ENCODE measurements at regions of chr5 and their contacts with region 1.

Region 1: DNA sequence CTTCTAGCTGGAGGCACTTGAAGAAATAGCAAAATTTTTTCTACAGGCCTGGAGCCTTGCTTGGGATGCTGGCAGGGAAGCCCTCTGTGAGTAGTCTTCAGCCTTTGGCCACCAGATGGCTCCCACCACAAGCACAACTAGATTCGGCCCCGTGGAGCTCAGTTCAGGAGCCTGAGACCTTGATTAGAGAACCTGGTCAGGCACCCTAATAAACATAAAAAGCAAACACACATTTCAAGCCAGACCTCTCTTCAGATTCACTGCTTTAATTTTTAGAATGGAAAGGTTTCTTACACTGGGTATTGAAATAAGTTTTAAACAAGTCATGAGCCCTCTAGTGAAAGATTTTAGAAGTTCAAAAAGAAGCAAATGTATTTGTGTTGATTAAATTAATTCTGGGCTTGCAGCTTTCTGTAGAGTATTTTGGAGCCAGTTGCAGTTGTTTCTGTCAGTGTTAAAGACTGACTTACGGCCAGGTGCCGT is 41.4 kb downstream of the GLRX start:
- DNase-seq: peak; percentile 83 to 86 (median 84)
- H3K4me3 ChIP-seq: peak overlapping the region in 3 of 7 experiments; percentile 2 to 52 (median 49)
- H3K27ac ChIP-seq: no peak overlapping the region
- H3K4me1 ChIP-seq: peaks cover 11 to 29% (median 25%) of the 10 kb centered on the region in 4 experiments
- H3K27me3 ChIP-seq: no peaks in the 10 kb centered on the region

Region 2: GRCh38 chr5:95646554-95647431 is 134.3 kb before region 1 on chr5 and contains the start of gene RFESD:
- CTCF ChIA-PET with region 1: interaction called, 22 read pairs
- POLR2A ChIA-PET with region 1: no interaction called
- DNase-seq: peak; percentile 97 to 99 (median 99)
- H3K4me3 ChIP-seq: peak within 1 kb of the TSS; percentile 13 to 76 (median 63)
- H3K27ac ChIP-seq: peak within 1 kb of the TSS; percentile 60 to 83
- H3K4me1 ChIP-seq: peaks cover 12 to 31% (median 20%) of the 10 kb centered on the region in 4 experiments
- H3K27me3 ChIP-seq: no peaks in the 10 kb centered on the region

Region 3: DNA sequence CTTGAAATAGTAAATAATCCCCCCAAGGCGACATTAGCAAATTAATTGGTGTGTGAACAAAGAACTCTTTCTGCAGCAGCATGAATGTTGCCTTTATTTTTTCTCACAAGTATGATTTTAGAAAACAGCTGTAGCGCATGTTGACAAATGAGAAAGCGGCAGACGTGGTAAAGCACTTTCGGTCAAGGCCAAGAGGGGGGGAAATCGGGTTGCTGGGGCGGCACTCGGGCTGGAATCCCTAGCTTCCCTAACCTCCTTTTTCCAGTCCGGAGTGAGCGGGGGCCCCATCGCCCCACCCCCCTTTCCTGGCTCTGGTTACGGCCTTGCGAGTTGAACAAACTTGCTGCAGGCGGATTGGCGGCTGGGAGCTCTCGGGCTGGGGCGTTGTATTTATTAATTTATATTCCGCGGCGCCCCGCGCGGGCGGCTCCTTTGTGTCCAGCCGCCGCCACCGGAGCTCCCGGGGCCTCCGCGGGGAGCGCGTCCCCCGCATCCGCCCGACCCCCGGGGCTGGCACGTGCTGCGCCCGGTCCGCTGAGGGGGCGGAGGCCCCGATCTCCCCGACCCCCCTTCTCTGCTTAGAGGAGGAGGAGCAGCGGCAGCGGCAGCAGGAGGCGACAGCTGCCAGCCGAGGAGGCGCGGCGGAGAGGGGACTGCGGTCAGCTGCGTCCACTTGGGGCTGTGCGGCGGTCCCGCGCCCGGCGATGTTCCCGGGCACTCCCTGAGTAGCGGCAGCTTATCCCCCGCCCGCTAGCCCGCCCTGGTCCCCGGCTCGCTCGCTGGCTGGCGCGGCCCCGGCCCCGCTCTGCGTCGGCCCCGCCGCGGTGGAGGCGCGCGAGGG is 50.2 kb before region 1 on chr5 and contains the start of gene RHOBTB3:
- CTCF ChIA-PET with region 1: interaction called, 10 read pairs
- POLR2A ChIA-PET with region 1: no interaction called
- DNase-seq: peak; percentile 61 to 87 (median 77)
- H3K4me3 ChIP-seq: peak within 1 kb of the TSS; percentile 69 to 96 (median 86)
- H3K27ac ChIP-seq: peak within 1 kb of the TSS; percentile 44 to 84
- H3K4me1 ChIP-seq: peaks cover 14 to 41% (median 25%) of the 10 kb centered on the region in 4 experiments
- H3K27me3 ChIP-seq: no peaks in the 10 kb centered on the region

Region 4: DNA sequence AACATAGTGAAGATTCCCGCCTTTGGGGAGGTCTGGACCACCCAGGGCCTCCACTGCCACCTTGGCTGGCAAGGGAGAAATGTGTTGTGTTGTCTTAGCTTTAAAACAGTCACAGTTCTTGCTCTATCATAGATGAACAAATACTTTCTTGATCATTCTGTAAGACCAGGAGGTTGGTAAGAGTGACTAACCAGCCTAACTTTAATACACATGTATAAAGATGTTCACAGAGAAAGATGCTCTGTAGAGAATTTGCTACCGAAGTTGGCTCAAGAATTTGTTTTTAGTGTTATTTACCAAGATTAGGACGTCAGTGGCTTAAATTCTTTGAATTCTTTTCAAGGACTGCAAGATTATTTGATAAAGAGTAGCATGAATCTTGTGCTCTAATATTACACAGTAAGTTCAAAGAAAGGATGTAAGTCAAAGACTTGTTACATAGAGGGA is 13.0 kb after region 1 on chr5:
- CTCF ChIA-PET with region 1: interaction called, 23 read pairs
- POLR2A ChIA-PET with region 1: no interaction called
- DNase-seq: no peak
- H3K4me3 ChIP-seq: no peak overlapping the region
- H3K27ac ChIP-seq: no peak overlapping the region
- H3K4me1 ChIP-seq: no peaks in the 10 kb centered on the region
- H3K27me3 ChIP-seq: no peaks in the 10 kb centered on the region

Region 5: DNA sequence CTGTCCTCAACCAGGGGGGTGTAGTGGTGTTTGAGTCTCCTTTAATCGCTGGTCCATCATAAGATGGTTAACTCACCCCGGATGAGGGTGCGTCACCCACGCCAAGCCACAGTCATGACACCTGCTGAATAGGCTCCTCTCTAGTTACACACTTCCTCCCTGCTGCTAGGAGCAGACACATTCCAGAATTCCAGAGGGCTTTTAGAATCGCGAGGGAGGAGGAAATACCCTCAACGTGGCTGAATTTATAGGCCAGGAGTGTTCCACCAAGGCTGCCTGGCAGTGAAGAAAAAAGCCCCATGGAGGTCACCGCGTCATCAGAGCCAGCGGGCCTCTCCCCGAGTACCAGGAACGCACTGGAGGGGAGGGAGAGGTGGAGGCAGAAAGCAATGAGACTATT is 36.3 kb after region 1 on chr5:
- CTCF ChIA-PET with region 1: interaction called, 33 read pairs
- POLR2A ChIA-PET with region 1: no interaction called
- DNase-seq: no peak
- H3K4me3 ChIP-seq: peak overlapping the region in 4 of 7 experiments; percentile 47 to 69 (median 62)
- H3K27ac ChIP-seq: peak overlapping the region in 1 of 2 experiments; percentile 47
- H3K4me1 ChIP-seq: peaks cover 14 to 61% (median 60%) of the 10 kb centered on the region in 4 experiments
- H3K27me3 ChIP-seq: no peaks in the 10 kb centered on the region

Region 6: GRCh38 chr5:95835682-95836385 is 54.7 kb after region 1 on chr5:
- CTCF ChIA-PET with region 1: interaction called, 430 read pairs
- POLR2A ChIA-PET with region 1: interaction called, 3 read pairs
- DNase-seq: peak in 2 of 3 donors; percentile 80 to 85
- H3K4me3 ChIP-seq: peak overlapping the region in 6 of 7 experiments; percentile 46 to 82 (median 72)
- H3K27ac ChIP-seq: peak overlapping the region; percentile 37 to 75
- H3K4me1 ChIP-seq: peaks cover 16 to 46% (median 32%) of the 10 kb centered on the region in 4 experiments
- H3K27me3 ChIP-seq: no peaks in the 10 kb centered on the region

Region 7: DNA sequence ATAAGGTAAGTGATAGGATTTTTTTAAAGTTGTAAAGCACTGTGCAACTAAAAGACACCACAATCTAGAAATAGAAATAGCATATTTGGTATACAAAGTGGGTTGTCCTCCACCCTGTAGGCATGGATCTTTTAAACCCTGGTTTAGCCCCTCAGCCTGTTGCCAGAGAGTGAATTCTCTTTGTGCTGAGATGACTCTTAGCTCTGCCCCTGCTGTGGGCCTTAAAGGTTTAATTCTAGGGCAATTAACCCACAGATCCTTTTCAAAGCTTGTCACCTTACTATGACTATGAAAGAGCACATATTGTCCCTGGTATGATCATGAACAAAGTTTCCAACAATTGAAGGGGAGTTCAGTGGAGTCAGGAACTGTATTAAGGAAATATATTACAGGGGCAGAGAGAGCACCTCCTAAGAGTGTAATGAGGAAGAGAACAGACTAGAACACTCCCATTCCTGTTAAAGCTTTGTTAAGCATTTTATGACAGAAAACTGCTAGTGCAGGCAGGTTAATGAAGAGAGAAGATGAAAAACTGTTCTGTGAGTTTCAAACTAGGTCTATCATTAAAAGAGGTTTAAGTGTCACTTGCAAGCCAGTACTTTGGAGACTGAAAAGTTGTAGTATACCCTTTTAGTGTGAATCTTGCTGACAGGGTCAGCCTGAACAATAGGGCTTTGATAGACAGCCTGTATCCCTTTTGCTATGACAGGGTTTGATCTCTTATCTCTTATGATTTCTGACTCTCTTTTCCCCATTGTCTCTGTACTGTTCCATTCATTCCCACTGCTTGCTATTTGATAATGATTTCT is 284.6 kb after region 1 on chr5:
- CTCF ChIA-PET with region 1: no interaction called
- POLR2A ChIA-PET with region 1: no interaction called
- DNase-seq: no peak
- H3K4me3 ChIP-seq: no peak overlapping the region
- H3K27ac ChIP-seq: no peak overlapping the region
- H3K4me1 ChIP-seq: peaks cover 3 to 25% (median 15%) of the 10 kb centered on the region in 4 experiments
- H3K27me3 ChIP-seq: no peaks in the 10 kb centered on the region